Activated T-helper 1 cell treated with anti-CD3 and anti-CD28 coated beads, Interleukin-12 subunit alpha, Interleukin-12 subunit beta, Interleukin-2, Interleukin-4 antibody, amounts not matched to agents 30 ng/mL and 10 ng/mL and 1 ng/mL, durations not matched to agents 14 hours and 24 hours and 36 hours (primary cell): ENCODE measurements at regions of chr2 and their contacts with region 1.

Region 1: DNA sequence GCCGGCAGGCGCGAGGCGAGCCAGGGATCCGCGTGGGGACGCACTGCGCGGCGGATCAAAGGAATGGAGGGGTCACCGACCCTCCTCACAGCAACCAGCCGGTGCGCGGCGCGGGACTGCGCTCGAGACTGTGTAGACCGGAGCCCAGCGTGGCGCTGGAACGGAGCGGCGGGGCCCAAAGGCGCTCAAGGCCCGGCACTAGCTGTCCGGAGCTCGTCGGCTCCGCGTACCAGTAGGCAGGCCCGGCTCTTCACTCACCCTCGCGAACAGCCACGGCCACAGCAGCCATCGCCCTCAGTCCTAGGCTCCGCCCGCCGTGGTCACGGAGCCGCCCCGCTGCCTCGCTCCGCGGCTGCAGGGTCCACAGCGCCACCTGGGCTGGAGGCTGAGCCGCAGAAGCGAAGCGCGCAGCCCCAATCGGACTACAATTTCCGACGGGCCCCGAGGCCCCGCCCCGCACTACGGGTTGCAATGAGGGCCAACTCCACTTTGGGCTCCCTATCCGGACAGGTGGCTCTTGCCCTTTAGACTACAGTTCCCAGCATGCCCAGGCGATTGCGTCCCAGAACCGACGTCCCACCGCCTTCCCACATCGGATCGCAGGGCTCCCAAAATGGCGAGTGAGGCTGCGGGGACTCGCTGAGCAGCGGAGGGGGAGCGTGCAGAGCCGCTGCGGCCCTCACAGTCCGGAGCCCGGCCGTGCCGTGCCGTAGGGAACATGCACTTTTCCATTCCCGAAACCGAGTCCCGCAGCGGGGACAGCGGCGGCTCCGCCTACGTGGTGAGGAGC is at the starts of genes EIF2B4 and SNX17:
- DNase-seq: peak; percentile 100
- H3K4me3 Mint-ChIP-seq: peak within 1 kb of the TSS; percentile 96
- H3K27ac Mint-ChIP-seq: peak within 1 kb of the TSS; percentile 98
- H3K4me1 Mint-ChIP-seq: peaks cover 43% of the 10 kb centered on the region
- H3K27me3 Mint-ChIP-seq: no peaks in the 10 kb centered on the region
- total RNA-seq, gene EIF2B4: 53.9 and 55.8 TPM in 2 replicates
- total RNA-seq, gene SNX17: 134 and 137 TPM in 2 replicates

Region 2: DNA sequence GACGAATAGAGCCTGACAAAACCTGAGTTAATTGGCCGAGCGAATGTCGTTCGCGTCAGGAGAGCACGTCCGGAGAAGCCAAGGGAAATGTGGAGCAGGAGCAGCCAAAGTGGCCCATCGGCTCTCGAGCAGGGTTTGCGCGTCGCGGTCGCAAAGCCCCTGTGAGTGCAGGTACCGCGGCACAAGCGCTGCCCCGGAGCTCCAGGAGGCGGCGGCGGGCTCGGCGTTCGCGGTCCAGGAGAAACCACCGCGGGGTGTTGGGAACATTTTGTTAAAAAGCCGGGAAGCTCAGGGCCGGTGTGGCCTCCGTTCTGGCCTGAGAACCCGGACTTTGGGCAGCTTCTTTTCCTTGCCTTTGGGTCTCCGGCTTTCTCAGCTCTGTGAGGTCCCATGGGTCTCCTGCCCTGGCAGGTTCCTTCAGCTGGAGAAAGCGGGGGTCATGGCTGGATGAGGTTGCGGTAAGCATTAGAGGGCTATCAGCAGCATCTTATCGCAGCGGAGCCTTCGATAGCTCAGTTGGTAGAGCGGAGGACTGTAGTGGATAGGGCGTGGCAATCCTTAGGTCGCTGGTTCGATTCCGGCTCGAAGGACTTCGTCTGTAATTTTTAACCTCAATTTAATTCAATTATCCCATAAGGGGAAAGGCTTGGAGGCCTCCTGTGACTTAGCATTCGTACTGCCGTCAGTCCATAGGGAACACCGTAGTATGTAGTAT is 319.8 kb before region 1 on chr2:
- intact Hi-C with region 1: loop called (anchors 1 kb)
- DNase-seq: peak; percentile 88
- H3K4me3 Mint-ChIP-seq: peak overlapping the region; percentile 96
- H3K27ac Mint-ChIP-seq: peak overlapping the region; percentile 99
- H3K4me1 Mint-ChIP-seq: peaks cover 36% of the 10 kb centered on the region
- H3K27me3 Mint-ChIP-seq: peaks cover 7% of the 10 kb centered on the region

Region 3: GRCh38 chr2:27133905-27134780 is 236.1 kb before region 1 on chr2 and contains the start of gene PREB:
- intact Hi-C with region 1: loop called (anchors 1 kb)
- DNase-seq: peak; percentile 99
- H3K4me3 Mint-ChIP-seq: peak within 1 kb of the TSS; percentile 95
- H3K27ac Mint-ChIP-seq: peak within 1 kb of the TSS; percentile 98
- H3K4me1 Mint-ChIP-seq: peaks cover 12% of the 10 kb centered on the region
- H3K27me3 Mint-ChIP-seq: no peaks in the 10 kb centered on the region
- total RNA-seq, gene PREB: 95.9 and 97.1 TPM in 2 replicates

Region 4: GRCh38 chr2:27380626-27381545 is 10.7 kb after region 1 on chr2 and contains the start of gene ZNF513:
- intact Hi-C with region 1: loop called (anchors 1 kb)
- DNase-seq: peak; percentile 87
- H3K4me3 Mint-ChIP-seq: peak within 1 kb of the TSS; percentile 92
- H3K27ac Mint-ChIP-seq: peak within 1 kb of the TSS; percentile 96
- H3K4me1 Mint-ChIP-seq: peaks cover 20% of the 10 kb centered on the region
- H3K27me3 Mint-ChIP-seq: no peaks in the 10 kb centered on the region
- total RNA-seq, gene ZNF513: 14.5 and 16.2 TPM in 2 replicates

Region 5: DNA sequence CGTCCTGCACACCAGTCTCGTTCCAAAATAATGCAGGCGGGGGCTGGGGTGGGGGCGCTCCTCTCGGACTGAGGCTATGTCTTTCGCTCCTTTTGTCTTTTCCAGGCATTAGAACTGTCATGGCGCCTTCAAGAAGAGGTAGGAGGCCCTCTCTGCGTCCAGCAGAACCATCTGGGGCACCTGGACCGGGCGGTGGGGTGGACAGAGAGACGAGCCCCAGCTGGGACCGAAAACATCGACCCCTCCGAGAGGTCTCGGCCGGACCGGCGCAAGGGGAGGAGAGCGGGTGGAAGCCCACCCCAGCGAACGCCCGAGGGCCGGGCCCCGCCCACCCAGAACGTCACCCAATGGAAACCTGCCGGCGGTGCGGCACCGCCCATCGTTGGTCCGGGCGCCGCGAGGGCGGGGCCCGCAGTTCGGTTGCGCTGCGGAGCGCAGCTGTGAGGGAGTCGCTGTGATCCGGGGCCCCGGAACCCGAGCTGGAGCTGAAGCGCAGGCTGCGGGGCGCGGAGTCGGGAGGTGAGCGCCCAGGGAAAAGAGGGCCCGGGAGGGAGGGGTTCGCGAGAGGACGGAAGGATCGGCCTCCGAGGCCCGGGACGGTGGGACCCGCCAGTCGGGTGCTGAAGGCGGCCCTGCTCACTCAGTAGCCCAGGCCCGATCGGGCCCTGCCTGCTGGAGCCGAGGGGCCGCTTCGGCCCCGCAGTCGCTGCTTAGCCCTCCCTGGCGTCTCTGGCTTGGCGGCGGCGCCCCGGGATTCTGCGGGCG is 58.2 kb after region 1 on chr2 and contains the start of gene NRBP1:
- intact Hi-C with region 1: loop called (anchors 1 kb)
- DNase-seq: peak; percentile 93
- H3K4me3 Mint-ChIP-seq: peak within 1 kb of the TSS; percentile 97
- H3K27ac Mint-ChIP-seq: peak within 1 kb of the TSS; percentile 97
- H3K4me1 Mint-ChIP-seq: peaks cover 37% of the 10 kb centered on the region
- H3K27me3 Mint-ChIP-seq: no peaks in the 10 kb centered on the region
- total RNA-seq, gene NRBP1: 99.7 and 106 TPM in 2 replicates

Region 6: DNA sequence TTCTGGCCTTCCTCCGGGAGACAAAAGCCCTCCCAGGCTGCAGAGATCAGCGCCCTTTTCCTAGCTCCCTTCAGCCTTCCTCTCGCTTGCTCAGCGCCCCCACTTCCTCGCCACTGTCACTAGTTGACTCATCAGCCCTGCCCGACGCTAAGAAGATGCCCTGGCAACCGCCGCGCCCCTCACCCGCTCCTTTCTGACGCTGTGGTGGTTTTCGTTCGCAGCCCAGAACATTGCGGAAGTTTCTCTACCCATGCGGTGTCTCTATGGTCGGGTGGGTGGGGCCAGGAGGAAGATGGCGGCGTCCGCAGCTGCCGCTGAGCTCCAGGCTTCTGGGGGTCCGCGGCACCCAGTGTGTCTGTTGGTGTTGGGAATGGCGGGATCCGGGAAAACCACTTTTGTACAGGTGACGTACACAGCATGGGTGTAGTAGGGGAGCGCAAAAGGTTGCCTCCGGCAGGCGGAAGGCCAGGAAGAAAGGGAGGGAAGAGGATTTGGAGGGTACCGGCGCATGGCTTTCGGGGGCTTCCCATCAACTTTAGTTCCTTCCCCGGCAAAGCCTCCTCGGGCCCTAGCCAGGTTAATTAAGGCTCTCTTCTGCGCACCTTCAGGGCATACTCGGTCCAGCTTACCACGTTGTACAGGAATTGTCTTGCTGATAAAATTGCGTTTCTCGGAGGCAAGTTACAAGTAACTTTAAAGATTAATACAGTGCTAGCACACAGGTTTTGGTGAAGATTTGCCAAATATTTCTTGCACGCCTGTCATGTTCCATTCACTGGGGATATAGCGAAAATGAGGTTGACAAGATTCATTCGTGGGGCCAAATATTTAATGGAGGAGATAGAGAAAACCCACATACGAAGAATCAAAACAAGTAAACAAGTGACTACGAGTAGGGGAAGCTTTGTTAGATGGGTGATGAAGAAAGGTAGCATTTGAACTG is 258.8 kb after region 1 on chr2 and contains the starts of genes CCDC121 and GPN1:
- intact Hi-C with region 1: loop called (anchors 1 kb)
- DNase-seq: peak; percentile 93
- H3K4me3 Mint-ChIP-seq: no peak within 1 kb of the TSS
- H3K27ac Mint-ChIP-seq: peak within 1 kb of the TSS; percentile 73
- H3K4me1 Mint-ChIP-seq: peaks cover 20% of the 10 kb centered on the region
- H3K27me3 Mint-ChIP-seq: no peaks in the 10 kb centered on the region
- total RNA-seq, gene CCDC121: 0.66 and 1.3 TPM in 2 replicates
- total RNA-seq, gene GPN1: 48.3 and 51.0 TPM in 2 replicates

Region 7: DNA sequence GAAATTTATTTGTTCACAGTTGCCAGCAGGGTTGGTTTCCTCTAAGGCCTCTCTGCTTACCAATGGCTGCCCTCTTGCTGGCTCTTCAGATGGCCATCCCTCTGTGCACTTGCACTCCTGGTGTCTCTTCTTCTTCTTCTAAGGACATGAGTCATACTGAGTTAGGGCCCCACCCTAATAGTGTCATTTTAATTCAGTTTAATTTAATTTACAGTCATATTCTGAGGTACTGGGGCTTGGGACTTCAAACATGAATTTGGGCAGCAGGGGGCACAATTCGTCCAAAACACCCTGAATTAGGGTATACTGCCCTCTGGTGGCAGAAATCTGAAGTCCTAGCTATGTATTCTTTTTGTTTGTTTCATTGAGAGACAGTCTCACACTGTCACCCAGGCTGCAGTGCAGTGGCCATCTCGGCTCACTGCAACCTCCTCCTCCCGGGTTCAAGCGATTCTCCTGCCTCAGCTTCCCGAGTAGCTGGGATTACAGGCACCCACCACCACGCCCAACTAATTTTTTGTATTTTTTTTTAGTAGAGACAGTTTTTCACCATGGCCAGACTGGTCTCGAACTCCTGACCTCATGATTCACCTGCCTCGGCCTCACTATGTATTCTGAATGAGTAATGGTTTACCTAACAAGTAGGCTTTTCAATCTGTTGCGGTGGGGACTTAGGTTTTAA is 313.3 kb after region 1 on chr2:
- intact Hi-C with region 1: loop called (anchors 1 kb)
- DNase-seq: peak; percentile 80
- H3K4me3 Mint-ChIP-seq: no peak overlapping the region
- H3K27ac Mint-ChIP-seq: peak overlapping the region; percentile 74
- H3K4me1 Mint-ChIP-seq: peaks cover 32% of the 10 kb centered on the region
- H3K27me3 Mint-ChIP-seq: no peaks in the 10 kb centered on the region